ENCODE measurements at regions of chr2 and their contacts with region 1.

Region 1: GRCh38 chr2:96760036-96760985 is at the start of gene CNNM4:
- DNase-seq: peak; percentile 81 to 88 (median 85)
- H3K4me3 ChIP-seq: peak within 1 kb of the TSS; percentile 68 to 81 (median 72)
- H3K4me3 Mint-ChIP-seq: peak within 1 kb of the TSS; percentile 92 to 96
- H3K27ac ChIP-seq: peak within 1 kb of the TSS; percentile 41 to 78
- H3K27ac Mint-ChIP-seq: peak within 1 kb of the TSS; percentile 78 to 94 (median 90)
- H3K4me1 ChIP-seq: peaks cover 46 to 51% of the 10 kb centered on the region in 2 donors
- H3K4me1 Mint-ChIP-seq: peaks cover 49% of the 10 kb centered on the region
- H3K27me3 ChIP-seq: peaks cover 0 to 4% of the 10 kb centered on the region in 2 donors
- H3K27me3 Mint-ChIP-seq: peaks cover 3 to 13% (median 4%) of the 10 kb centered on the region in 3 donors
- CTCF ChIP-seq: no peak
- polyA plus RNA-seq, gene CNNM4: 2.3 to 8.3 (median 2.6) TPM

Region 2: DNA sequence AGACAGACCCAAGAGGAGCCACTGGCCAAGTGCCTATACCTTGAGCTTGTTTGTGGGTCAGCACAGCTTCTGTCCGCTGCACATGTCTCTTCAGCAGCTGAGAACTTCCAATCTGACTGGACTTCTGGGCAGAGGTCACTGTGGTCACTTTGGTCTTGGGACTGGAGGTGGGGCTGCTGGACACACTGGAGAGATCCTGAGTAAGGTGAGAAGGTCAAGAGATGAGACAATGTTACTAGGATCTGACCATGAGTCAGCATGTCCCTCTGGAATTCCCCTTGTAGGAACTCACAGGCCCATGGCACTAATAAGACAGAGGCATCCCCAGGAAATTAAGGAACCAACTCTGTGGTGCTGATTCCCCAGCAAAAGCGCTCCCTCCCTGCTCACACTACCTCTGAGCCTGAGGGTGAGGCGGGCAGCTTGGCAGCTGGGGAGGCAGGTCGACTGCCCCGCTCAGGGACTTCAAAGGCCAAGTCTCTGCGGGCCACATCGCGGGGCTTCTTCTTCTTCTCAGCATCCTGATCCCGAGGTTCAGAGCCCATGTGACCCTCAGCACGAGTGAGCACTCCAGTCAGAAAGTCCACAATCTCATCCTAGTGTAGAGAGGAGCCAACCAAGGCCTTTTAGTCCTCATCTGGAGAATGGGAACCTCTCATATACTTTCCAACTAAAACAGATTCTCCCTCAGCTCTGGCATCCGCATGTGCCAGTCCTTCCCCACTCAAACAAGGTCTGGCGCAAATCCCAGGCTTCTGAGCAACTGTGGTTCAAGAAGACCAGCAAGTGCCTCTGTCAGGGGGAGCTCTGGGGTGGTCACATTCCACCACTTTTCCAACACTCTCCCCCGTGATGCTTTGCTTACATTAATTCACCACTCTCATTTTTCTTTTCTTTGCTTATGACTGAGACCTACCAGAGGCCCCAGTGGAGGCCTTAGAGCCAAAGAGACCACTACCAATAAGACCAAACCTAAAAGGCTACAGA is 151.5 kb before region 1 on chr2:
- intact Hi-C with region 1: loop called in 1 of 2 experiments (anchors 10 kb)
- DNase-seq: peak in 2 of 3 donors; percentile 4 to 71
- H3K4me3 ChIP-seq: no peak overlapping the region
- H3K4me3 Mint-ChIP-seq: no peak overlapping the region
- H3K27ac ChIP-seq: peak overlapping the region in 1 of 2 donors; percentile 46
- H3K27ac Mint-ChIP-seq: peak overlapping the region in 3 of 7 donors; percentile 19 to 52 (median 31)
- H3K4me1 ChIP-seq: no peaks in the 10 kb centered on the region
- H3K4me1 Mint-ChIP-seq: no peaks in the 10 kb centered on the region
- H3K27me3 ChIP-seq: no peaks in the 10 kb centered on the region
- H3K27me3 Mint-ChIP-seq: peaks cover 0 to 1% (median 0%) of the 10 kb centered on the region in 3 donors
- CTCF ChIP-seq: no peak

Region 3: GRCh38 chr2:96618604-96619283 is 141.6 kb before region 1 on chr2:
- intact Hi-C with region 1: loop called in 1 of 2 experiments (anchors 5 kb)
- DNase-seq: peak; percentile 35 to 57 (median 43)
- H3K4me3 ChIP-seq: peak overlapping the region in 1 of 3 experiments; percentile 76
- H3K4me3 Mint-ChIP-seq: no peak overlapping the region
- H3K27ac ChIP-seq: peak overlapping the region; percentile 83 to 87
- H3K27ac Mint-ChIP-seq: peak overlapping the region; percentile 81 to 97 (median 90)
- H3K4me1 ChIP-seq: peaks cover 40 to 50% of the 10 kb centered on the region in 2 donors
- H3K4me1 Mint-ChIP-seq: peaks cover 49% of the 10 kb centered on the region
- H3K27me3 ChIP-seq: no peaks in the 10 kb centered on the region
- H3K27me3 Mint-ChIP-seq: peaks cover 0 to 2% (median 0%) of the 10 kb centered on the region in 3 donors
- CTCF ChIP-seq: no peak

Region 4: GRCh38 chr2:96638144-96639121 is 121.9 kb before region 1 on chr2 and contains the start of gene KANSL3:
- intact Hi-C with region 1: loop called (anchors 5 kb)
- DNase-seq: peak; percentile 92 to 95 (median 95)
- H3K4me3 ChIP-seq: peak within 1 kb of the TSS; percentile 61 to 83 (median 64)
- H3K4me3 Mint-ChIP-seq: peak within 1 kb of the TSS; percentile 93 to 97
- H3K27ac ChIP-seq: peak within 1 kb of the TSS; percentile 87 to 88
- H3K27ac Mint-ChIP-seq: peak within 1 kb of the TSS; percentile 97 to 99 (median 98)
- H3K4me1 ChIP-seq: peaks cover 23 to 37% of the 10 kb centered on the region in 2 donors
- H3K4me1 Mint-ChIP-seq: peaks cover 36% of the 10 kb centered on the region
- H3K27me3 ChIP-seq: no peaks in the 10 kb centered on the region
- H3K27me3 Mint-ChIP-seq: peaks cover 2 to 7% (median 4%) of the 10 kb centered on the region in 3 donors
- CTCF ChIP-seq: no peak
- polyA plus RNA-seq, gene KANSL3: 2.5 to 25.3 (median 7.2) TPM

Region 5: GRCh38 chr2:96739633-96740428 is 20.5 kb before region 1 on chr2 and contains the start of gene LMAN2L:
- intact Hi-C with region 1: loop called in 1 of 2 experiments (anchors 2 kb)
- DNase-seq: peak; percentile 92 to 98 (median 95)
- H3K4me3 ChIP-seq: peak within 1 kb of the TSS; percentile 88 to 94 (median 90)
- H3K4me3 Mint-ChIP-seq: peak within 1 kb of the TSS; percentile 98
- H3K27ac ChIP-seq: peak within 1 kb of the TSS; percentile 0 to 79
- H3K27ac Mint-ChIP-seq: peak within 1 kb of the TSS; percentile 90 to 99 (median 97)
- H3K4me1 ChIP-seq: peaks cover 22 to 33% of the 10 kb centered on the region in 2 donors
- H3K4me1 Mint-ChIP-seq: peaks cover 29% of the 10 kb centered on the region
- H3K27me3 ChIP-seq: no peaks in the 10 kb centered on the region
- H3K27me3 Mint-ChIP-seq: peaks cover 0 to 1% (median 0%) of the 10 kb centered on the region in 3 donors
- CTCF ChIP-seq: no peak
- polyA plus RNA-seq, gene LMAN2L: 7.9 to 22.4 (median 16.6) TPM

Region 6: DNA sequence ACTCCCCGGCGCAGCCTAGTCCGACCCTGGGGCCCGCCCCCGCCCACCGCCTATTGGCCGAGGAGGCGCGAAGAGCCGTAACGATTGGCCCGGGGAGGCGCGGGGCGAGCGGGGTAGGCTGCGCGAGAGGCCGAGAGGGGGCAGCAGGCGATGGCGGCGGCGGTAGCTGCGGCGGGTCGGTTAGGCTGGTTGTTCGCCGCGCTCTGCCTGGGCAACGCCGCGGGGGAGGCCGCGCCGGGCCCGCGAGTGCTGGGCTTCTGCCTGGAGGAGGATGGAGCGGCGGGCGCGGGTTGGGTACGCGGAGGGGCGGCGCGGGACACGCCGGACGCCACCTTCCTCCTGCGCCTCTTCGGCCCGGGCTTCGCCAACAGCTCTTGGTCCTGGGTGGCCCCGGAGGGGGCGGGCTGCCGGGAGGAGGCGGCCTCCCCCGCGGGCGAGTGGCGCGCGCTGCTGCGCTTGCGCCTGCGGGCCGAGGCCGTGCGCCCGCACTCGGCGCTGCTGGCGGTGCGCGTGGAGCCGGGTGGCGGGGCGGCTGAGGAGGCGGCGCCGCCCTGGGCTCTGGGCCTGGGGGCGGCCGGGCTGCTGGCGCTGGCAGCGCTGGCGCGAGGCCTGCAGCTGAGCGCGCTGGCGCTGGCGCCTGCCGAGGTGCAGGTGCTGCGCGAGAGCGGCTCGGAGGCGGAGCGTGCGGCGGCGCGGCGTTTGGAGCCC is 56.0 kb after region 1 on chr2 and contains the start of gene CNNM3:
- intact Hi-C with region 1: loop called (anchors 5 to 10 kb)
- DNase-seq: peak; percentile 86 to 88 (median 87)
- H3K4me3 ChIP-seq: peak within 1 kb of the TSS; percentile 51 to 93 (median 83)
- H3K4me3 Mint-ChIP-seq: peak within 1 kb of the TSS; percentile 86 to 93
- H3K27ac ChIP-seq: peak within 1 kb of the TSS in 1 of 2 donors; percentile 69
- H3K27ac Mint-ChIP-seq: peak within 1 kb of the TSS in 6 of 7 donors; percentile 33 to 70 (median 68)
- H3K4me1 ChIP-seq: peaks cover 22 to 35% of the 10 kb centered on the region in 2 donors
- H3K4me1 Mint-ChIP-seq: peaks cover 53% of the 10 kb centered on the region
- H3K27me3 ChIP-seq: no peaks in the 10 kb centered on the region
- H3K27me3 Mint-ChIP-seq: peaks cover 10 to 12% (median 10%) of the 10 kb centered on the region in 3 donors
- CTCF ChIP-seq: peak; percentile 79
- polyA plus RNA-seq, gene CNNM3: 1.2 to 12.0 (median 4.9) TPM

Region 7: DNA sequence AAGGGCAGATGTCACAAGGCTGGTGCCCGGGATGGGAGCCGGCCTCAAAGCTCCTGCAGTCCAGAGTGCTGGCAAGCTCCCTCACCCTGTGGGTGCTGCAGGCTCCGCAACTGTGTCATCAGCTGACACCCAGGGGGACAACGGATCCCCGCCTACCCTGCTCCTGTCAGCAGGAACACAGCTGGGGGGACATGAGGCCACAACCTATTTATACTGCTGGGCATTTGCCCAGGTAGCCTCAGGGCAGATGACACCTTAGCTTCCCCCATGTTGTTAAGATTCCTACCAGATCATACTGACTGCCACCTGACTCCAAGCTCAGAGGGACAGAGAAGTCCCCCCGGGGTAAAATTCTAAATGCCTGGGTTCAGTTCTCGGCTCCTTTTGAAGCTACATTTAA is 82.3 kb after region 1 on chr2:
- intact Hi-C with region 1: no loop called
- DNase-seq: no peak
- H3K4me3 ChIP-seq: no peak overlapping the region
- H3K4me3 Mint-ChIP-seq: no peak overlapping the region
- H3K27ac ChIP-seq: no peak overlapping the region
- H3K27ac Mint-ChIP-seq: no peak overlapping the region
- H3K4me1 ChIP-seq: peaks cover 6 to 12% of the 10 kb centered on the region in 2 donors
- H3K4me1 Mint-ChIP-seq: peaks cover 18% of the 10 kb centered on the region
- H3K27me3 ChIP-seq: no peaks in the 10 kb centered on the region
- H3K27me3 Mint-ChIP-seq: peaks cover 1 to 2% (median 1%) of the 10 kb centered on the region in 3 donors
- CTCF ChIP-seq: no peak

Region 8: GRCh38 chr2:96867756-96868554 is 107.6 kb after region 1 on chr2:
- intact Hi-C with region 1: no loop called
- DNase-seq: no peak
- H3K4me3 ChIP-seq: peak overlapping the region; percentile 44 to 78 (median 50)
- H3K4me3 Mint-ChIP-seq: peak overlapping the region; percentile 80 to 91
- H3K27ac ChIP-seq: peak overlapping the region in 1 of 2 donors; percentile 42
- H3K27ac Mint-ChIP-seq: peak overlapping the region in 4 of 7 donors; percentile 56 to 80 (median 77)
- H3K4me1 ChIP-seq: peaks cover 48 to 64% of the 10 kb centered on the region in 2 donors
- H3K4me1 Mint-ChIP-seq: peaks cover 42% of the 10 kb centered on the region
- H3K27me3 ChIP-seq: peaks cover 20 to 75% of the 10 kb centered on the region in 2 donors
- H3K27me3 Mint-ChIP-seq: peaks cover 55 to 91% (median 56%) of the 10 kb centered on the region in 3 donors
- CTCF ChIP-seq: no peak

Measured in CD14-positive monocyte (primary cell).